GM10248 (cell line): ENCODE measurements at regions of chr3 and their contacts with region 1.

Region 1: DNA sequence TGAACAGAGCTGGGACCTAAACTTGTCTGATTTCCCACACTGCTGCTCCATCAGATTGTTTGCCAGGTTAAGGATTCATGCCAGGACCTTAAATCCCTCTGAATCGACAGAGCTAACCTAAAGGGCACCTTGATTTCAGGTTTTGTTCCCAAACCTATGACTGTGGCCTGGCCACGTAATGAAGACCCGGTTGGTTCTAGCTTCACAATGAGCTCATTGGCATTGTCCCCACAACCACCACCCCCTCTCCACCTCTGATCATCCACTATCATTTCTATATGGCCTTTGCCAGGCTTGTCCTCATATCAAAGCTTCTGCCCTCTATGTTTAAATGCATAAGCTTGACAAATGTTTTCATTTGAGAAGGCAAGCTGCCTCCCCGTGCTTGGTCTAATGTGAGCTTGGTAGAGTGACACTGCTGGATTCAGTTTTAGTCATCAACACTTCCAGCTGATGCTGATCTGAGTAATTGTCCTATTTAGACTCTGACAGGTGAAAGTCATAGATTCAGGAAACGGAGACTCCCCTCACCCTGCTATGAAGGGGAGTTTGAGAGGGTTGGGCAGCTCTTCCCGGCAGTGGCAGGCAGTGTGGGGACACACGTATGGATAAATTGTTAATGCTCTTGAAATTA is 407.1 kb upstream of the CFAP20DC start:
- DNase-seq: peak; percentile 35
- CTCF ChIP-seq: no peak

Region 2: GRCh38 chr3:59444294-59444671 is 12.7 kb before region 1 on chr3:
- CTCF ChIA-PET with region 1: interaction called, 18 read pairs
- POLR2A ChIA-PET with region 1: no interaction called
- DNase-seq: no peak
- CTCF ChIP-seq: no peak

Region 3: DNA sequence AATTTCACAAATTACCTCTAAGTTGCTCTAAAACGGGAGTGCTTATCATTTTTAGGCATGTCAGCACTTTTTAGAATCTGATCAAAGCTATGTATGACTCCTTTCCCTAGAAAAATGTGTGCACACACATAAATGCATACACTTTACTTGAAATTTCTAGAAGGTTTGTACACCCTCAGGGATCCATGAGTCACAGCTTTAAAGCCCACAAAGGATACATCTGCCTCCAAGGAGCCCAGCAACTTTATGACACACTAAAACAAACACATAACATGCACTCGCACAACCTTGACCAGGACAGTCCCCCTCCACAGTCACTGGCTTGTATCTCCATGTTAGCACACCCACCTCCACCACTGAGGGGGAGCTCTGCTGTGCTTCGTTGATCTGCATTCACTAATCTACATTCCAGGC is 314.8 kb after region 1 on chr3:
- CTCF ChIA-PET with region 1: no interaction called
- POLR2A ChIA-PET with region 1: no interaction called
- DNase-seq: no peak
- CTCF ChIP-seq: no peak